ENCODE measurements at regions of chr15 and their contacts with region 1.

Region 1: DNA sequence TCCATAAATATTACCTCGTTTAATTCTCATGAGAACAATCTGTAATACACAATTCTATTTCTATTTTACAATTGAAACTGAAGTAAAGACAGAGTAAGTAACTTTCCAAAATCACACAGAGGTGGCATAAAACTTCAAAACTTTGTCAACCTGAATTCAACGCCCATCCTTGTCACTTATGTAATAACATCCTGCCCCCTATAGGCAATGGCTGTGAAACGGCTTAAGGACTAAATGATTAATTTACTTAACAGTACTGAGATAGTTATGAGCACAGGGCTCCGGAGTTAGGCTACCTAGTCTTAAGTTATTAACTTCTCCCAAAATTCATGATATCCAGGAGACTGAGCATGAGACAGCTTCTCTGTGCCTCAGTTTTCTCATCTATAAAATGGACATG is 293.1 kb upstream of the CHRM5 start:
- DNase-seq: no peak
- H3K4me3 ChIP-seq: no peak overlapping the region
- H3K27ac ChIP-seq: no peak overlapping the region
- H3K4me1 ChIP-seq: no peaks in the 10 kb centered on the region
- H3K27me3 ChIP-seq: peaks cover 0 to 11% (median 0%) of the 10 kb centered on the region in 4 donors
- CTCF ChIP-seq: peak in 4 of 6 experiments; percentile 15 to 58 (median 25)
- POLR2A ChIP-seq: no peak

Region 2: DNA sequence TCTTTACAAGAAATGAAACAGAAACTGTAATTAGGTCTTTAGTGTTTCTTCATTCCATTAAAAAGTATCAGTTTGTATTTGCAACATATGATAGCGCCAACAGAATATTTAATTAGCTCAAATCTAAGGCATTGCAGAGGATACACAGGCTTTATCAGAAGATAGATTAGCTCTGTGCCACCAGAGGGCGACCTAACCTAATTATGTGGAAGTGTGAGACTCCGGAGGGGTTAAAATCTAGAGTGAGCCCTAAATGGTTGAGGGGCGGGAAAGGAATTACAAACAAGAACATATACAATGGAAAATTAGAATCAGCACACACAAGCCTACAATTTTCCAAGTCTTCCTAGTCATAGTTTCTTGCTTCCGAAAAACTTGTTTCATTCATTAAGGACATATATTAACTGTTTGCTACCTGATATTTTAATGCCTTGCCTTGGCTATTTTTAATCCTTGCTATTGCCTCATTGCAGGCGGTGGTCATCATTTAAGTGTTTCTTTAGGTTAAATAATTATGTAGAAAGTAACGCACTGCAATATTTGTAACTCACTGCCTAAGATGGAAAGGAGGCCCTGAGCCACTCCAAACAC is 382.4 kb before region 1 on chr15:
- intact Hi-C with region 1: loop called (anchors 5 kb)
- DNase-seq: no peak
- H3K4me3 ChIP-seq: no peak overlapping the region
- H3K27ac ChIP-seq: no peak overlapping the region
- H3K4me1 ChIP-seq: peaks cover 0 to 17% (median 0%) of the 10 kb centered on the region in 3 donors
- H3K27me3 ChIP-seq: peaks cover 0 to 7% (median 0%) of the 10 kb centered on the region in 4 donors
- CTCF ChIP-seq: peak; percentile 36 to 75 (median 62)
- POLR2A ChIP-seq: no peak

Region 3: GRCh38 chr15:33908406-33908805 is 233.2 kb after region 1 on chr15:
- intact Hi-C with region 1: no loop called
- DNase-seq: no peak
- H3K4me3 ChIP-seq: no peak overlapping the region
- H3K27ac ChIP-seq: no peak overlapping the region
- H3K4me1 ChIP-seq: peaks cover 0 to 5% (median 0%) of the 10 kb centered on the region in 3 donors
- H3K27me3 ChIP-seq: no peaks in the 10 kb centered on the region
- CTCF ChIP-seq: no peak
- POLR2A ChIP-seq: no peak